Right ventricle myocardium superior (tissue), 1 donor: ENCODE measurements at regions of chr9 and their contacts with region 1.

Region 1: DNA sequence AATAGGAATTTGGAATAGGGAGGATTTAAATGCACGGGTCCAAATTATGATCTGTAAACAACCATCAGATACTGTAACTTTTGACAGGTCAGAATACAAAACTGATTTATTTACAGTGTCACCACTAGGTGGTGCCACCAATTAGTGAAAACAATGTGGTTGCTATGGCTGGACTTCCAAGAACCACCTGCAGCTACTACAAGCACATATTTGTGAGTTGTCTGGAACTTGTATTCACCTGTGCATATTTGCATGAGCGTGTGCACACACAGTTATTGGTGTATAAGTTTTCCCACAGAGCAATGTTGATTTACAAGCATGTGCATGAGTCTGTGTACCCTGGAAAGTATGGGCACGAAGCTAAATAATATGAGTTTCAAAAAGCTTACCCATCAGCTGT is 3.0 kb upstream of the HRCT1 start:
- DNase-seq: no peak
- ATAC-seq: no peak

Region 2: GRCh38 chr9:35940458-35941407 is 37.7 kb after region 1 on chr9:
- intact Hi-C with region 1: loop called (anchors 5 kb)
- DNase-seq: no peak
- ATAC-seq: no peak

Region 3: GRCh38 chr9:35954942-35955546 is 52.0 kb after region 1 on chr9:
- intact Hi-C with region 1: no loop called
- DNase-seq: no peak
- ATAC-seq: peak; percentile 89

Region 4: GRCh38 chr9:36023260-36024048 is 120.4 kb after region 1 on chr9:
- intact Hi-C with region 1: loop called (anchors 5 kb)
- DNase-seq: peak; percentile 50
- ATAC-seq: peak; percentile 74